ENCODE measurements at regions of chr1 and their contacts with region 1.

Region 1: DNA sequence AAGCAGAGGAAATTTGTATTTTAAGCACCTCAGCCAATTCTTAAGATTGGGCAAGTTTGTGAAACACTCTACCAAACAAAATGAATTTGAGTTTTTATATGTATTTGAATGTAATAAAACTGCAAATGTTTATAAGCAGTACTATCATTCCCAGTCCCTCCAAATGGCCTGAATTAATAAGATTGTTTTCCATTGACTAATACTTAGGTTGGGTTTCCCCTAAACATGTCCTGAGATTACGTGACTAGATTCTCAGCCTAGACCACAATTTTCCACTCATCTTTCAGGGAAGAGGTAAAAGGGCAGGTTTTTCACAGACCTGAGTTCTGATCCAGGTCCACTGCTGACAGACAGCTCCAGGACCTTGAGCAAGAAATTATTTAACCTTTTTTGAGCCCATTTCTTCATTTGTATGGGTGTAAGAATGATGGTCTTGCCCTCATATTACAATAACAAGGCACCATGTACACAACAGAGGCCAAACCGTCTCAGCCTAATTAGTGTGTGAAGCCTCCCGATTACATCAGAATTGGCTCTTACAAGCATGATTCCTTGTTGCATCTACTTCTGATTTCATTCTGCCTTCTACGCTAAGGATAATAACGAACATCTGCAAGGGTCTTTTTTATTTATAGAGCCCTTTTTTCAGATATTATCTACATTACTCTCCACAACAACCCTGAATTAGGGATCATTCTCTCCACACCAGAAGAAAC is 51.2 kb downstream of the BEND5 start:
- DNase-seq: no peak
- H3K4me3 ChIP-seq: no peak overlapping the region
- H3K27ac ChIP-seq: no peak overlapping the region
- H3K4me1 ChIP-seq: no peaks in the 10 kb centered on the region
- H3K27me3 ChIP-seq: peaks cover 6% of the 10 kb centered on the region
- CTCF ChIP-seq: no peak

Region 2: GRCh38 chr1:47036764-47037163 is 1688.7 kb before region 1 on chr1:
- CTCF ChIA-PET with region 1: no interaction called
- POLR2A ChIA-PET with region 1: no interaction called
- intact Hi-C with region 1: loop called (anchors 10 kb)
- DNase-seq: no peak
- H3K4me3 ChIP-seq: no peak overlapping the region
- H3K27ac ChIP-seq: no peak overlapping the region
- H3K4me1 ChIP-seq: no peaks in the 10 kb centered on the region; the same call in 1 of the 2 replicates
- H3K27me3 ChIP-seq: no peaks in the 10 kb centered on the region
- CTCF ChIP-seq: no peak